ENCODE measurements at regions of chr19 and their contacts with region 1.

Region 1: GRCh38 chr19:36139473-36140303 is at the start of gene CAPNS1:
- DNase-seq: peak; percentile 97
- H3K4me3 Mint-ChIP-seq: peak within 1 kb of the TSS; percentile 97
- H3K27ac Mint-ChIP-seq: peak within 1 kb of the TSS; percentile 97
- H3K4me1 Mint-ChIP-seq: peaks cover 38% of the 10 kb centered on the region
- H3K27me3 Mint-ChIP-seq: no peaks in the 10 kb centered on the region
- CTCF ChIP-seq: no peak
- total RNA-seq, gene CAPNS1: 666 and 788 TPM in 2 replicates

Region 2: DNA sequence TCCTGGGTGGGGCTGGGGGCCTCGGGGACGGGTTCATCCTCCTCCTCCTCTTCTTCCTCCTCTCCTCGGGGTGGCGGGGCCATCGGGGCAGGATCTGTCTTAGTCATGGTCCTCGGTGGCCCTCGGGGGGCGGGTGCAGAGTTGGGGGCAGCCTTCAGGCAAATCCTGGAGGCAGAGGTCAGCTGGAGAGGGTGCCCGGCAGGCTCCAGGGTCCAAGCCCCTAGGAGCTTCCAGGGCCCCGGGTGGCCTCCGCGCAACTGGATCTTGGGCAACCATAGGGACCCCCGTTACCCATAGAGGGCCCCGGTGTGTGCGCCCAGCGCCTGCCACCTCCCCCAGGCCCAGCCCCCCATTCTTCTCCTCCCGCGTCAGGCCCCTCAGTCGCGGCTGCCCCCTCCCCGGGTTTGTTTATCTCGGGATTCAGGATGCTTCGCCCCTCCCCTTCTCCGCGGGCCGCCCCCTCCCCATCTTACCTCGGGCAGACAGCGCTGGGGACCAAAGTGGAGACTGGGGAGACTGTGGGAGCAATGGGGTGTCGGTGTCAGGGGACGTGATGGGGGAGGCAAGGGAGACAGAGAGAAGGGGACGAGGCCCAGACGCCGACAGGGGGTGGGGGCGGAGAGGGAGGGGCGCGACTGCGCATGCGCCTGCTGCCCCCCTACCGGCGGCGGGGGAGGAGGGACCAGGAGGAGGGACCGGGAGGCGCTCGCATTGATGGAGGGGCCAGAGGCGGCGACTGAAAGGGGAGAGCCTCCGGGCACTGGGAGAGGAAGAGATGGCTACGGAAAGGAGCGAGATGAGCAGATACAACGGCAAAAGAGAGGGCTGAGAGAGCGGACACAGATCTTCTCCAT is 107.2 kb before region 1 on chr19 and contains the start of gene CLIP3:
- CTCF ChIA-PET with region 1: no interaction called
- POLR2A ChIA-PET with region 1: no interaction called
- intact Hi-C with region 1: no loop called
- DNase-seq: no peak
- H3K4me3 Mint-ChIP-seq: no peak within 1 kb of the TSS
- H3K27ac Mint-ChIP-seq: no peak within 1 kb of the TSS
- H3K4me1 Mint-ChIP-seq: no peaks in the 10 kb centered on the region
- H3K27me3 Mint-ChIP-seq: no peaks in the 10 kb centered on the region
- CTCF ChIP-seq: no peak
- total RNA-seq, gene CLIP3: 1.2 and 2.3 TPM in 2 replicates

Region 3: DNA sequence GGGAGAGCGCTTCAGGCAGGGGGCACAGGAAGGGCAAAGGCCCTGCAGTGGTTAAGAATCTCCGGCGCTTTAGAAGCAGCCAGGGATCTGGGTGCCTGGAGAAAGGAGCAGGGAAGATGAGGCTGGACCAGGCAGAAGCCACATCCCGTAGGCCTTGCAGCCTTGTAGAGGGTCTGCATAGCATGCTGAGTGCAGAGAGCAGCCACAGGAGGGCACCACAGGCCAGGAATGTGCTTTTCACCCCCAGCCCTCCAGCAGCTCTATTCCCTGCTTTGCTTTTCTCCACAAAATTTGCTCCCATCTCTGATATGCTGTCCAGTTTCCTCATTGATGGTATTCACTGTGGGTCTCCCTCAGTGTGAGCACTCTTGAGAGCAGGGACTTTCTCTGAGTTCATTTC is 79.3 kb before region 1 on chr19:
- CTCF ChIA-PET with region 1: no interaction called
- POLR2A ChIA-PET with region 1: no interaction called
- intact Hi-C with region 1: no loop called
- DNase-seq: peak; percentile 50
- H3K4me3 Mint-ChIP-seq: no peak overlapping the region
- H3K27ac Mint-ChIP-seq: no peak overlapping the region
- H3K4me1 Mint-ChIP-seq: peaks cover 4% of the 10 kb centered on the region
- H3K27me3 Mint-ChIP-seq: no peaks in the 10 kb centered on the region
- CTCF ChIP-seq: peak; percentile 65

Region 4: DNA sequence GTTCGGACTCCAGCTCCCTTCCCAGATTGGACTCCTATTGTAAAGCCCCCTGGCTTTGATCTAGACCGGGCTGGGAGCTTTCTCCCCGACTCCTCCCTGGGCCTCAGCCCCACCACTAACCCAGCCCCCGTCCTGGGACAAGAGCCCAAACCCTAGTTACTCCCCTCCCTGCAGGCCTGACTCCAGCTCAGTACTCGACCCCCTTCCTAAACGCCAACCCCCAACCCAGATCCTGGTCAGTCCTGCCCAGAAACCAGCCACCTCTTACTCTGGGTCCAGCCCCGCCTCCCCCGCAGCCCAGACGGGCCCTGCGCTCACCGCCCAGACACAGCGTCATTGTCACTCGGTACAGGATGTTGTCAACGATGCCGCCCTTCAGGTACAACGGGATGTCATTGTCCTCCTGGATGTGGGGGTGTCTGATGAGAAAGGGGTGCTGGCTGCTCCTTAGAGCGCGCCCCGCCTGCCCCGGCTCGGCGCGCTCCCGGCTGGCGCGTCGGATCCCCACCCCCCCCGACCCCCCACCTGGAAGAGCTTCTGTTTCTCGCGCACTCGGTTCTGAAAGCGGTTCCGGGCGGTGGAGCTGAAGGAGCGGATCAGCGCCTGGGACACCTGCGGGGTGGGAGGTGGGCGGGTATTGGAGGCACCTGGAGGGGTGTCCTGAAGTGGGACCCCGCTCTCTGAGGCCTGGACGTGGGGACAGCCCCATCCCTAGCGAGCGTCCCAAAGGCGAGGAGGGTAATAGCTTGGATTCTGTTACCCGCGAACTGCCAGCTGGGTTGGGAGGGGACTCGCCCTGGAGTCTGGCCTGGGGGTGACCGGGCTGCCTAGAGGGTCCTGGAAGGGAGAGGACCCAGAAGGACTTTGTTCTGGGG is 11.7 kb after region 1 on chr19:
- CTCF ChIA-PET with region 1: interaction called, 7 read pairs
- POLR2A ChIA-PET with region 1: interaction called, 20 read pairs
- intact Hi-C with region 1: no loop called
- DNase-seq: no peak
- H3K4me3 Mint-ChIP-seq: no peak overlapping the region
- H3K27ac Mint-ChIP-seq: peak overlapping the region; percentile 17
- H3K4me1 Mint-ChIP-seq: peaks cover 29% of the 10 kb centered on the region
- H3K27me3 Mint-ChIP-seq: no peaks in the 10 kb centered on the region
- CTCF ChIP-seq: no peak